ENCODE measurements at regions of chr3 and their contacts with region 1.

Region 1: GRCh38 chr3:58332575-58333188 is at the start of gene PXK:
- DNase-seq: peak; percentile 88
- H3K4me3 ChIP-seq: peak within 1 kb of the TSS; percentile 88
- H3K27ac ChIP-seq: peak within 1 kb of the TSS; percentile 78
- H3K4me1 ChIP-seq: peaks cover 39% of the 10 kb centered on the region
- H3K27me3 ChIP-seq: no peaks in the 10 kb centered on the region
- CTCF ChIP-seq: peak; percentile 30
- total RNA-seq, gene PXK: 9.2 TPM

Region 2: GRCh38 chr3:58408906-58409305 is 76.2 kb after region 1 on chr3:
- intact Hi-C with region 1: loop called (anchors 5 kb)
- DNase-seq: no peak
- H3K4me3 ChIP-seq: no peak overlapping the region
- H3K27ac ChIP-seq: no peak overlapping the region
- H3K4me1 ChIP-seq: peaks cover 2% of the 10 kb centered on the region
- H3K27me3 ChIP-seq: no peaks in the 10 kb centered on the region
- CTCF ChIP-seq: no peak

Region 3: GRCh38 chr3:58491506-58492402 is 159.1 kb after region 1 on chr3 and contains the start of gene KCTD6:
- intact Hi-C with region 1: loop called (anchors 10 kb)
- DNase-seq: peak; percentile 93
- H3K4me3 ChIP-seq: peak within 1 kb of the TSS; percentile 89
- H3K27ac ChIP-seq: peak within 1 kb of the TSS; percentile 87
- H3K4me1 ChIP-seq: peaks cover 67% of the 10 kb centered on the region
- H3K27me3 ChIP-seq: no peaks in the 10 kb centered on the region
- CTCF ChIP-seq: peak; percentile 78
- total RNA-seq, gene KCTD6: 6.2 TPM

Measured in left ventricle myocardium inferior (tissue), 1 donor.